Mammary epithelial cell (primary cell): ENCODE measurements at regions of chr4 and their contacts with region 1.

Region 1: GRCh38 chr4:12729384-12729783 is 754.8 kb downstream of the RAB28 start:
- DNase-seq: no peak
- H3K4me3 ChIP-seq: no peak overlapping the region
- H3K27ac ChIP-seq: no peak overlapping the region
- H3K4me1 ChIP-seq: no peaks in the 10 kb centered on the region
- H3K27me3 ChIP-seq: no peaks in the 10 kb centered on the region
- CTCF ChIP-seq: peak; percentile 17 to 35

Region 2: DNA sequence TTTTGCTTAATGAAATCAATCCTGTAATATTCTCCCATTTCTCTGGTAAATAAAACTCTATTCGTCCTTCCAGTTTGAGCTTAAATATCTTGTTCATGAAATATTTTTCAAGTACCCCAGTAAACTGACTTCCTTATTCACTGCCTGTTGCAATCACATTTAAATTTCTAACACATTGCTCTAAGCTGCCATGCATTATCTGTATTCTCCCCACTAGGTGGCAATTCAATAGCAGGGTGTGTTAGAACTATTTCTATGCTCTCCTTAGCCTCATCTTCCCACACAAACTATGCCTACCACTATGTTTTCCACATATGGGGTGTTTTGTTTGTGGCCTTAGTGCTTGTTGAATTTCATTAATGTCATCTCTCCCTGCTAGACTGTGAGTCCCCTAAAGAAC is 923.5 kb before region 1 on chr4:
- CTCF ChIA-PET with region 1: no interaction called
- dilution Hi-C with region 1: no loop called
- in situ Hi-C with region 1: no loop called
- intact Hi-C with region 1: loop called (anchors 10 kb)
- DNase-seq: peak; percentile 28
- H3K4me3 ChIP-seq: no peak overlapping the region
- H3K27ac ChIP-seq: no peak overlapping the region
- H3K4me1 ChIP-seq: no peaks in the 10 kb centered on the region
- H3K27me3 ChIP-seq: no peaks in the 10 kb centered on the region
- CTCF ChIP-seq: peak; percentile 55 to 74

Region 3: DNA sequence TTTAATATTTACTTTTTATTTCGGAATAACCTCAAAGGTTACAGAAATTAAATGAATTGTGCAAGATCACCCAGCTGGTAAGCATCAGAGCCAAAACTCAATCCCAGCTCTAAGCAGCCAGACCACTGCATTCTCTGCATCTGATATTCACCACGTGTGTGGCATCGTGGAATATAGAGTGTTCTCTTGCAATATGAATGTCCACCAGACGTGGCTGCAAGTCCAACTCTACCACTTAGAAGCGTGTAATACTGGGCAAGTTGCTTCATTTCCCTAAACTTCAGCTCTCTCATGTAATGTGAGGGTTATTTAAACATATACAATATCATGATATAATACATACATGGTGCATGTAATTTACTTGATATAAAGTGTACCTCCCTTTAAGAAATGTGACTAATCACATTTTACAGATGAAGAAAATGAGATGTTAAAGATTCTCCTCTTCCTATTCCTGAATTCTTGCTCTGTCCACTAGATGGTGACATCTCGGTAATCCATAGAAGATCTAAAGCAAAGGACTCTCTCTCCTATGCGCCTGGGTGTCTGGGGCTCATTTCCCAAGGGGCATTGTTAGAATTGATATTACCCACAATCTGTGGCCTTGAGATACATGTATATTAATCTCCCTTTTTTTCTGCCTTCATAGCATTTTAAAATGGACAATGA is 50.3 kb before region 1 on chr4:
- CTCF ChIA-PET with region 1: no interaction called
- dilution Hi-C with region 1: no loop called
- in situ Hi-C with region 1: no loop called
- intact Hi-C with region 1: loop called (anchors 1 kb)
- DNase-seq: no peak
- H3K4me3 ChIP-seq: no peak overlapping the region
- H3K27ac ChIP-seq: no peak overlapping the region
- H3K4me1 ChIP-seq: no peaks in the 10 kb centered on the region
- H3K27me3 ChIP-seq: no peaks in the 10 kb centered on the region
- CTCF ChIP-seq: peak; percentile 31 to 37

Region 4: GRCh38 chr4:12852338-12853307 is 123.2 kb after region 1 on chr4:
- CTCF ChIA-PET with region 1: no interaction called
- dilution Hi-C with region 1: no loop called
- in situ Hi-C with region 1: no loop called
- intact Hi-C with region 1: loop called (anchors 5 kb)
- DNase-seq: peak; percentile 59
- H3K4me3 ChIP-seq: no peak overlapping the region
- H3K27ac ChIP-seq: no peak overlapping the region
- H3K4me1 ChIP-seq: no peaks in the 10 kb centered on the region
- H3K27me3 ChIP-seq: no peaks in the 10 kb centered on the region
- CTCF ChIP-seq: peak; percentile 37 to 60

Region 5: DNA sequence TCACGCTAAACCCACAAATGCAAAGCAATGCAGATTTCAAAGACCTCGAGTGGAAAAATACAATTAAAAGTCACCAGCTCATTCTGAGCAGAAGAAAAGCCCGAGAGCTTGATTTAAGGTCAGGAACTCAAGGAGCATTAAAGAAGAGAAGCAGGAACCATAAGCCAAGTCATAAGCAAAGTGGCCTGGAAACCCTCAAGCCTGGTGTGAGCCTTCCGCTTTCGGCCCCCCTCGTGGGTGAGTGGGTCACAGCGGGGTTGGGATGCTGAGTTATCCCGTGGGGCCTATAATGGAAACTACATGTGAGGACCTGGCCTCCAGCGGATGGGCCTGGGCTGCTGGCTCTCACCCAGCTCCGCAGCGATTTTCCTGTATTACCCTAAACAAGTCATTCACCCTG is 250.4 kb after region 1 on chr4:
- CTCF ChIA-PET with region 1: no interaction called
- dilution Hi-C with region 1: no loop called
- in situ Hi-C with region 1: no loop called
- intact Hi-C with region 1: no loop called
- DNase-seq: no peak
- H3K4me3 ChIP-seq: no peak overlapping the region
- H3K27ac ChIP-seq: no peak overlapping the region
- H3K4me1 ChIP-seq: no peaks in the 10 kb centered on the region
- H3K27me3 ChIP-seq: no peaks in the 10 kb centered on the region
- CTCF ChIP-seq: no peak

Region 6: DNA sequence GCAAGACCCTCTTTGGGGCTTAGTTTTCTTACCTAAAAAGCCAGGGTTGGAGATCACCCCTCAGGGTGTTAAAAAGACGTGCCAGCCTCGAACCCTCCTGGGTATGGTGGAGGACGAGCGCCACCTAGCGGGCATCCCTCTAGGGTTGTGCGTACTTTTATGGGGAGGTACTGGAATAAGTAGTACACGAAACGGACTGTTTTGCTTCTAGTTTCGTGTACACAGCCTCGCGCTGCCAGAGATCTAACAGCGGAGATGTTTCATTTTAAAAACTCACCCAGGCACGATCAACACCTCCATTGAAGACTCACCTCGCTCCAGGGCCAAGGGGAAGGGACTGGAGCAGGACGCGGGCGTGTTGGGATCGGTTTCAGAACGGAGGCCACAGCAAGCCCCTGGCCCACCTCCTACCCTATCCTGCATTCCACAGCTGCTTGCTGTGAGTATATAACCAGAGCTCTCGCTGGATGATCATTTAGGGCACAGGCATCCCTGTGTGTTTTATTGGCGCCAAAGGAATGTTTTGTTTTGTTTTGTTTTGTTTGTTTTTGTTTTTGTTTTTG is 819.7 kb after region 1 on chr4:
- CTCF ChIA-PET with region 1: no interaction called
- dilution Hi-C with region 1: no loop called
- in situ Hi-C with region 1: loop called (anchors 5 to 10 kb)
- intact Hi-C with region 1: loop called (anchors 1 kb)
- DNase-seq: peak; percentile 70
- H3K4me3 ChIP-seq: peak overlapping the region; percentile 49 to 53 (median 49)
- H3K27ac ChIP-seq: no peak overlapping the region
- H3K4me1 ChIP-seq: peaks cover 16% of the 10 kb centered on the region
- H3K27me3 ChIP-seq: peaks cover 12% of the 10 kb centered on the region
- CTCF ChIP-seq: peak; percentile 77 to 93